ENCODE measurements at regions of chr9 and their contacts with region 1.

Region 1: GRCh38 chr9:34899535-34900158 is 58.4 kb upstream of the PHF24 start:
- DNase-seq: peak; percentile 78 to 85
- H3K4me3 ChIP-seq: no peak overlapping the region
- H3K27ac ChIP-seq: no peak overlapping the region
- H3K4me1 ChIP-seq: no peaks in the 10 kb centered on the region
- H3K27me3 ChIP-seq: peaks cover 0 to 15% of the 10 kb centered on the region in 2 donors
- CTCF ChIP-seq: peak; percentile 82

Region 2: GRCh38 chr9:34291023-34291422 is 608.6 kb before region 1 on chr9:
- intact Hi-C with region 1: no loop called
- DNase-seq: no peak
- H3K4me3 ChIP-seq: no peak overlapping the region
- H3K27ac ChIP-seq: no peak overlapping the region
- H3K4me1 ChIP-seq: no peaks in the 10 kb centered on the region
- H3K27me3 ChIP-seq: no peaks in the 10 kb centered on the region
- CTCF ChIP-seq: no peak

Region 3: GRCh38 chr9:34862043-34862442 is 37.6 kb before region 1 on chr9:
- intact Hi-C with region 1: no loop called
- DNase-seq: no peak
- H3K4me3 ChIP-seq: no peak overlapping the region
- H3K27ac ChIP-seq: no peak overlapping the region
- H3K4me1 ChIP-seq: no peaks in the 10 kb centered on the region
- H3K27me3 ChIP-seq: peaks cover 0 to 3% of the 10 kb centered on the region in 2 donors
- CTCF ChIP-seq: no peak

Region 4: GRCh38 chr9:34974664-34975063 is 75.0 kb after region 1 on chr9:
- intact Hi-C with region 1: no loop called
- DNase-seq: no peak
- H3K4me3 ChIP-seq: no peak overlapping the region
- H3K27ac ChIP-seq: no peak overlapping the region
- H3K4me1 ChIP-seq: no peaks in the 10 kb centered on the region
- H3K27me3 ChIP-seq: peaks cover 0 to 8% of the 10 kb centered on the region in 2 donors
- CTCF ChIP-seq: no peak

Region 5: GRCh38 chr9:34989003-34989945 is 89.6 kb after region 1 on chr9 and contains the start of gene DNAJB5:
- intact Hi-C with region 1: loop called (anchors 5 kb)
- DNase-seq: peak; percentile 100
- H3K4me3 ChIP-seq: peak within 1 kb of the TSS; percentile 90 to 91
- H3K27ac ChIP-seq: peak within 1 kb of the TSS; percentile 93 to 100
- H3K4me1 ChIP-seq: peaks cover 0 to 50% (median 48%) of the 10 kb centered on the region in 4 donors
- H3K27me3 ChIP-seq: no peaks in the 10 kb centered on the region
- CTCF ChIP-seq: no peak

Region 6: DNA sequence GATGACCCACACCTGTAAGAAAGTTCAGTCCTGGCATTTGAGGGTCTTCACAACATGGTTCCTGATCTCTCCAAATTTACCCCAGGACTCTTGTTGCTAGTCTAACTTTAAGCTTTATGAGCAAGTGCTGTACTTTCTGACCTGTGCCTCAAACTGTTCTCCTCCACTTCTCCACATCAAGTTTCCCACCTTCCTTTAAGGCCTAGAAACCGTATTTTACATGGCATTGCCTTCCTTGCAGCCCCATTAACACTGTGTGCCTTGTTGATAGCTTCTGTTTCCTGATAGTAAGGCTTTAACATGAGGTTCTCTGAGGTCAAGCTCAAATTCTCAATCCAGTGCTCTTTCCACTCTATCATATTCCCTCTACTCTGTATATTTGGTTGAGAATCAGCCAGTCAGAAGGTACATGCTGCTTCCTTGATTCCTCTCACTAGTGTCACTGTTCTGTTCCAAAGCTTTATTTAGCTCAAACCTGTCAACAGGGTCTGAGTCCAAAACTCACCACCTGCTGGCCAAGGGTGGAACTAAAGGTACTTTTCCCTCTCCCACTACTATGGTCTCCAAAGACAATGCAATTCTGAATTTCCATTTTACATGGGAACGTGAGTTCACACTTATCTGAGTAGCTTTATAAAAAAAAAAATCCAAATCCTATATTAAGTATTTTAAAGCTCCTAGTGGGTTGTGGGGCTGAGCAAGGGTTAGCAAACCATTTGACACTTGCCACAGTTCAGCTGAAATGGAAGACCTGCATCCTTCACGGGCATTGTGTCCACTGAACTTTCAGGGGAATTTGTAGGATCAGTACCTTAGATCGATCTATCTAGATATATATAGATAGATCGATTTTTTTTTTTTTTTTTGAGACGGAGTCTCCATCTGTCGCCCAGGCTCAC is 151.7 kb after region 1 on chr9:
- intact Hi-C with region 1: loop called (anchors 10 kb)
- DNase-seq: no peak
- H3K4me3 ChIP-seq: no peak overlapping the region
- H3K27ac ChIP-seq: no peak overlapping the region
- H3K4me1 ChIP-seq: peaks cover 0 to 3% (median 0%) of the 10 kb centered on the region in 4 donors
- H3K27me3 ChIP-seq: no peaks in the 10 kb centered on the region
- CTCF ChIP-seq: peak; percentile 50

Region 7: GRCh38 chr9:35096035-35096849 is 196.6 kb after region 1 on chr9 and contains the start of gene PIGO:
- intact Hi-C with region 1: loop called (anchors 5 kb)
- DNase-seq: peak; percentile 84 to 92
- H3K4me3 ChIP-seq: peak within 1 kb of the TSS; percentile 76 to 87
- H3K27ac ChIP-seq: peak within 1 kb of the TSS; percentile 94 to 96
- H3K4me1 ChIP-seq: peaks cover 0 to 20% (median 10%) of the 10 kb centered on the region in 4 donors
- H3K27me3 ChIP-seq: no peaks in the 10 kb centered on the region
- CTCF ChIP-seq: peak; percentile 65 to 72